ENCODE measurements at regions of chr5 and their contacts with region 1.

Region 1: DNA sequence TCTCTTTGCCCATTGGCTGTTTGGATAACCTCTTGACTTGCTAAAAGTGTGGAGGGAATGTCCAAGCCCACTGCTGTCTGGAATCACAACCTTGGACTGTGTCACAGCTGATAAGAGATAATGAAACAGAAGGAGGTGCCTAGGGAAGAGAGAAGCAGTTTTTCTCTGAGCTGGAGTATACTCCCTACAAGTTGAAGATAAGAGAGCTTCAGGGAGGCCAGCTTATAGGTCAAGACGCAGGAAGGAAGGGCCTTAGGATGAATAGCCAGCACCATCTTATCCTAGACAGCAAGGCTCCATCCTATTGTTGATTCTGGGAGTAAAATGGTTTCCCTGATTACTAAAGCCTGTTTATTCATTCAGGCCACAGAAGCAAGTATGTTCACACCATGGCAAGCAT is 244.7 kb downstream of the NPR3 start:
- DNase-seq: no peak
- ATAC-seq: no peak
- H3K4me3 ChIP-seq: no peak overlapping the region
- H3K27ac ChIP-seq: no peak overlapping the region
- H3K4me1 ChIP-seq: no peaks in the 10 kb centered on the region
- CTCF ChIP-seq: no peak
- EP300 ChIP-seq: no peak
- POLR2A ChIP-seq: no peak
- RAD21 ChIP-seq: no peak

Region 2: GRCh38 chr5:32545102-32545800 is 410.6 kb before region 1 on chr5:
- CTCF ChIA-PET with region 1: no interaction called
- POLR2A ChIA-PET with region 1: interaction called, 11 read pairs
- DNase-seq: no peak
- ATAC-seq: no peak
- H3K4me3 ChIP-seq: no peak overlapping the region
- H3K27ac ChIP-seq: no peak overlapping the region
- H3K4me1 ChIP-seq: no peaks in the 10 kb centered on the region
- CTCF ChIP-seq: no peak
- EP300 ChIP-seq: no peak
- POLR2A ChIP-seq: no peak
- RAD21 ChIP-seq: no peak